Mammary epithelial cell (primary cell): ENCODE measurements at regions of chr10 and their contacts with region 1.

Region 1: DNA sequence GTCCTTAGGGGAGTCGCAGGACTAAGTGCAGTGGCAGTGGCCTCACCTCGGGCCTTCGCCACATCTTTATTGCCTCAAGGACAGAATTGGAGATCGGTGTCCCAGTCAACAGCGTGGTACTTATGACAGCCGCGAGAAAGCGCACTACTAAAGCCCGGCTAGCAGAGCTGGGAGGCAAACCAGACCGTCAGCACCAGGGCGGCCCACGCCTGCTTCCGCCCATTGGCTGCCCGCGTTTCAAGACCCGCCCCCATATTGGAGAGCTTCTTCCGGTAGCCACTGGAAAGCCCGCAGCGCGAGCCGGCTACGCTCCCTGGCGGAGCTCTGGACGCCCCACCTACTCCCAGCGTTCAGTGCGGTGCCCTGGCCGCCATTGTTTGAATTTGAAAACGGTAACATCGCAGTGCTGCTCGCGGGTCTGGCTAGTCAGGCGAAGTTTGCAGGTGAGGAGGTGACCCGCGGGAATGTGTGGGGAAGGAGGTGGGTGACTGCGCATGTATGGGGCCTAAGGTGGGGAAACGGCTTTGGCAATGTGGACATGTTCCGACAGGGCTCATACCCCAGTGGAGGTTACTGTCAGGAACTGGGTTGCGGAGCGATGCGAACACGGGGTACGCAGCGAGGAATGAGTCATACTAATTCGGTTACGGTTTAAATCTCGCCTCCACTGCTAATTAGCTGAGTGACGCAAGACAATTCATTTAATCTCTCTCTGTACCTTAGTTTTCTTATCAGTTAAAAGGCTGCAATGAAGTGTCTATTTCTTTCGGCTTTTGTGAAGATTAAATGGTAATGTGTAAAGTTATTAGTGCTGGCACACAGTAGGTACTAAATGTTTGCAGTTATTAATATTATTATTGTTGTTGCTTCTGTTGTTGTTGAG is at the start of gene KIF20B:
- DNase-seq: peak; percentile 98
- H3K4me3 ChIP-seq: peak within 1 kb of the TSS; percentile 54 to 96 (median 84)
- H3K27ac ChIP-seq: peak within 1 kb of the TSS; percentile 95
- H3K4me1 ChIP-seq: peaks cover 12% of the 10 kb centered on the region
- H3K27me3 ChIP-seq: no peaks in the 10 kb centered on the region
- CTCF ChIP-seq: peak; percentile 10 to 51
- total RNA-seq, gene KIF20B: 3.8 to 29.9 TPM

Region 2: DNA sequence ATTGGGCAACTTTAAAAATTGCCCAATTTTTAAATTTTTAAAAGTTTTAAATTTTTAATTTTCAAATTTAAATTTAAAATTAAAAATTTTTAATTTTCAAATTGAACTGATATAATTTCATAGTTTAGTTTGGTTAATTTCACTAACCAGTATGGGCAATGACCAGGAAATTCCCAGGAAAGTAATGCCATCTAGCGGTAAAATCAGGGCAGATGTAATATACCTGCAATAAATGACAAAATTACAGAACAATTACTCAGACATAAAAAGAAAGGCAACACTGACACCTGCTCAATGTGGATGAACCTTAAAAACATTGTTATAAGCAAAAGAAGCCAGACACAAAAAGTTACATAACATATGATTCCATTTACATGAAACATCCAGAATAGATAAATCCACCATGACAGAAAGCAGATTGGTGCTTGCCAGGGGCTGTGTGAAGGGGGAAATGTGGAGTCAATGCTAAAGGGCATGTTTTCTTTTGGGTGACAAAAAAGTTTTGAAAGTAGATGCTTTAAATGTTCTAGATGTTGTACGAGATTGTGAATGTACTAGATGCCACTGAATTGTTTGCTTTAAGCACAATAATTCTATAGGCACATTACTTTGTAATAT is 137.5 kb before region 1 on chr10:
- CTCF ChIA-PET with region 1: no interaction called
- dilution Hi-C with region 1: no loop called
- in situ Hi-C with region 1: no loop called
- intact Hi-C with region 1: loop called (anchors 1 kb)
- DNase-seq: peak; percentile 48
- H3K4me3 ChIP-seq: no peak overlapping the region
- H3K27ac ChIP-seq: no peak overlapping the region
- H3K4me1 ChIP-seq: no peaks in the 10 kb centered on the region
- H3K27me3 ChIP-seq: no peaks in the 10 kb centered on the region
- CTCF ChIP-seq: peak; percentile 63 to 71

Region 3: GRCh38 chr10:89665302-89665701 is 36.2 kb before region 1 on chr10:
- CTCF ChIA-PET with region 1: no interaction called
- dilution Hi-C with region 1: no loop called
- in situ Hi-C with region 1: no loop called
- intact Hi-C with region 1: loop called (anchors 2 kb)
- DNase-seq: peak; percentile 87
- H3K4me3 ChIP-seq: no peak overlapping the region
- H3K27ac ChIP-seq: no peak overlapping the region
- H3K4me1 ChIP-seq: peaks cover 8% of the 10 kb centered on the region
- H3K27me3 ChIP-seq: no peaks in the 10 kb centered on the region
- CTCF ChIP-seq: peak; percentile 18 to 55